Left colon (tissue), 2 donors: ENCODE measurements at regions of chr1 and their contacts with region 1.

Region 1: DNA sequence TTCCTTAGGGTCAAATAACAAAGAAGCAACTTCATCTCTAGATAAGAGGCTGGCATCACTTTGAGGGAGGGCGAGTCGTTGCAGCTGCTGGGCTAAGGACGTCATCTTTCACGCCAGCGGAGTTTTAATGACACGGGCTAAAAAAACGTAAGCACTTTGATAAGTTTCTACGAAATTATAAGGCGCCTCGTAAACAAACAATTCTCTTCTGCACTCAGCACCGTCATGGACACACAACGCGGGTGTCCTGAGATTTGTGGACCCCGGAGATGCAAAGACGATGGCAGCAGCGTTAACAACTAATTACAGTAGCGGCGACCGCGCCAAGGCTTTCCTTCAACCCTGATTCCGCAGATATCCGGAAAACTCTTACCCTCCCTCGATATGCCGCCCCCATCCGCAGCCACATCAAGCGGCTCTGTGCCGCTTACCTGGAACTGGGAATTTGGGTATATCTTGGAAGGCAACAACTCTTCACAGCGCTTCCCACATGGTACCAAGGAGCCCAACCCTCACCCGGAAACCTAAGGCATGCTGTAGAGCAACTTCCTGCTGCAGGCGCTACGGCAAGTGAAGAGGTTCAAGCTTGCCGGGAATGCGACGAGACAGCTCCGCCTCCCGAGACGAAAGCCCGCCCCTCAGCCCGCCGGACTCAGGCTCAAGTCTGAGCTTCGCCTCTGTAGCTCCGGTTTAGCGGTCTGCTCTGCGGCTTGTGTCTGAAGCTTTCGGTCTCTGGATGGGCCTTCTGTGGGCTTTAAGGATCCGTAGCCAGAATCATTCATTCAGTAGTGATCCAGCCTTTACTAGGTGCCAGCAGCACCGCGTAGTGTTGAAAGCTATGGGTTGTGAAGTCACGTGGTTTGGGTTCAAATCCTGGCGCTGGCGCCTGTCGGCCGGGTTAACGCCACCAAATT is at the start of gene HEATR1:
- DNase-seq: peak; percentile 93 to 94
- ATAC-seq: peak; percentile 100
- total RNA-seq, gene HEATR1: 15.3 to 20.0 TPM

Region 2: GRCh38 chr1:236495467-236496112 is 108.7 kb before region 1 on chr1:
- intact Hi-C with region 1: no loop called
- DNase-seq: no peak
- ATAC-seq: peak; percentile 23

Region 3: GRCh38 chr1:236808564-236809130 is 204.4 kb after region 1 on chr1:
- intact Hi-C with region 1: loop called in 1 of 2 experiments (anchors 10 kb)
- DNase-seq: peak in 1 of 2 donors; percentile 12
- ATAC-seq: peak; percentile 97